Stomach (tissue), 19 donors: ENCODE measurements at regions of chr17 and their contacts with region 1.

Region 1: GRCh38 chr17:49715717-49716279 is 8.0 kb upstream of the SLC35B1 start:
- DNase-seq: peak in 1 of 2 donors; percentile 74
- H3K4me3 ChIP-seq: no peak overlapping the region
- H3K27ac ChIP-seq: peak overlapping the region; percentile 24 to 85 (median 59)
- H3K4me1 ChIP-seq: peaks cover 15 to 33% (median 25%) of the 10 kb centered on the region in 4 donors
- H3K27me3 ChIP-seq: no peaks in the 10 kb centered on the region
- CTCF ChIP-seq: no peak
- EP300 ChIP-seq: no peak
- POLR2A ChIP-seq: no peak

Region 2: GRCh38 chr17:49763735-49764558 is 48.1 kb after region 1 on chr17 and contains the start of gene FAM117A:
- intact Hi-C with region 1: loop called (anchors 10 kb)
- DNase-seq: peak; percentile 97 to 99
- H3K4me3 ChIP-seq: peak within 1 kb of the TSS; percentile 83 to 99 (median 88)
- H3K27ac ChIP-seq: peak within 1 kb of the TSS; percentile 53 to 90 (median 83)
- H3K4me1 ChIP-seq: peaks cover 10 to 48% (median 29%) of the 10 kb centered on the region in 4 donors
- H3K27me3 ChIP-seq: no peaks in the 10 kb centered on the region
- CTCF ChIP-seq: no peak
- EP300 ChIP-seq: no peak
- POLR2A ChIP-seq: no peak
- total RNA-seq, gene FAM117A: 0.58 to 39.7 (median 6.7) TPM

Region 3: DNA sequence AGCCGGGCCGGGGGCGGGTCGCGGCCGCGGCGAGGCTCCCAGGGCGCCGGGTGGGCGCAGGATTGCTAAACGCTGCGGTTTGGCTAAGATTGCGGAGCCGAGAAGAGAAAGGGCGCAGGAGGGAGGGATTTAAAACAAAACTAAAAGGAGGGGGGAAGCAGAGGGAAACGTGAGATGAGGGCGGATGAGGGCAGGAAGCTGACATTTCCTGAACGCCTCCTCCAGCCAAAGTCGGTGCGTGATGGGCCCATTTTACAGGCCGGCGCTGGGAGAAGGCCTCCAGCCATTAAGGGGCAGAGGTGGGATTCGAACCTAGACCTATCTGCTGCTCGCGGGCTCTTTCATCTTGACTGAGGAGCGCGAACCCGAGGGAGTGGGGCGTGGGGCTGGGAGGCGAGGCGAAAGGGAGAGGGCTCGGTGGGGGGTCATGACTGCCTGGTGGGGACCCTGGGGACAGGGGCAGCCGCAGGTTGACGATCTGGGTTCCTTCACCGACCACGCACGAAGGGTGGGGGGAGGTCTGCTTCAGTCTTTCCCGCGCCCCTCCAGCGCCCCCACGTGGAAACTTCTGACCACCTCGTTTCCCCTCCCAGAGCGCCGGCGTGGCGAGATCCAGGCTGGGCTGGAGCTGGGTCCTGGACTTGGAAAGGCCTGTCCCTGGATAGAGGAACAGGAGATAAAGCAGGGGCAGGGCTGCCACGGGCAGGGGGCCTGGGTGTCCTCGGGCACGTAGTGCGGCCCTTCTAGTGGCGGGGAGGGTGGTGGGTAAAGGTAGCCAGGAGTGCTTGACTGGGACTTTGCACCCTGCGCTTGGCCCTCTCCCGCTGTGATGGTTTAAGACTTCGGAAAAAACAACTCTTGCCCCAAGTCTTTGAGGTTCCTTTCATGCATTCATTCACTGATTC is 135.8 kb after region 1 on chr17:
- intact Hi-C with region 1: loop called (anchors 10 kb)
- DNase-seq: peak; percentile 75 to 88
- H3K4me3 ChIP-seq: peak overlapping the region; percentile 60 to 67 (median 62)
- H3K27ac ChIP-seq: peak overlapping the region in 4 of 5 donors; percentile 20 to 73 (median 37)
- H3K4me1 ChIP-seq: peaks cover 0 to 20% (median 17%) of the 10 kb centered on the region in 4 donors
- H3K27me3 ChIP-seq: peaks cover 0 to 7% (median 3%) of the 10 kb centered on the region in 3 donors
- CTCF ChIP-seq: peak in 4 of 7 experiments; percentile 43 to 66 (median 56)
- EP300 ChIP-seq: no peak
- POLR2A ChIP-seq: no peak